ENCODE measurements at regions of chr4 and their contacts with region 1.

Region 1: DNA sequence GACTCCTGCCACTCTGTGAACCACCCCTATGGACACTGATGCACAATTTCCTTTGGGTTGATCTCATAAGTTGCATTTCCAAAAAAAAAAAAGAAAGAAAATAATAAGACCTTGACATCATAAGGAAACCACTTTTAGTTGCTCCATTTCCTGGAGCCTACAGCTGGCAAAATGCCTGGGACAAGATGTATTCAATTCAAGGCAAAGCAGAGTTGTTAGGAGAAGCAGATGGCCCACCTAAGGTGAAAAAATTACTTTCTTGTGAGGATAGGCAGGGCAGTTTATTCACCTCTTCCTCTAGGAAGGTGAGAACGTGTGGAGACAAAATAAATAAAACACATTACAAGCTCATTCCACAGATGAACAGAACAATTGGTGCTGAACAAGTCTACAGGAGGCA is 14.1 kb upstream of the SCRG1 start:
- DNase-seq: no peak
- H3K4me3 ChIP-seq: no peak overlapping the region
- H3K27ac ChIP-seq: no peak overlapping the region
- H3K4me1 ChIP-seq: peaks cover 27% of the 10 kb centered on the region
- H3K27me3 ChIP-seq: no peaks in the 10 kb centered on the region
- CTCF ChIP-seq: no peak

Region 2: GRCh38 chr4:173311368-173311767 is 101.7 kb before region 1 on chr4:
- CTCF ChIA-PET with region 1: no interaction called
- dilution Hi-C with region 1: no loop called
- in situ Hi-C with region 1: loop called in 1 of 2 experiments (anchors 5 kb)
- intact Hi-C with region 1: no loop called
- DNase-seq: no peak
- H3K4me3 ChIP-seq: no peak overlapping the region
- H3K27ac ChIP-seq: no peak overlapping the region
- H3K4me1 ChIP-seq: peaks cover 7% of the 10 kb centered on the region
- H3K27me3 ChIP-seq: no peaks in the 10 kb centered on the region
- CTCF ChIP-seq: no peak

Region 3: DNA sequence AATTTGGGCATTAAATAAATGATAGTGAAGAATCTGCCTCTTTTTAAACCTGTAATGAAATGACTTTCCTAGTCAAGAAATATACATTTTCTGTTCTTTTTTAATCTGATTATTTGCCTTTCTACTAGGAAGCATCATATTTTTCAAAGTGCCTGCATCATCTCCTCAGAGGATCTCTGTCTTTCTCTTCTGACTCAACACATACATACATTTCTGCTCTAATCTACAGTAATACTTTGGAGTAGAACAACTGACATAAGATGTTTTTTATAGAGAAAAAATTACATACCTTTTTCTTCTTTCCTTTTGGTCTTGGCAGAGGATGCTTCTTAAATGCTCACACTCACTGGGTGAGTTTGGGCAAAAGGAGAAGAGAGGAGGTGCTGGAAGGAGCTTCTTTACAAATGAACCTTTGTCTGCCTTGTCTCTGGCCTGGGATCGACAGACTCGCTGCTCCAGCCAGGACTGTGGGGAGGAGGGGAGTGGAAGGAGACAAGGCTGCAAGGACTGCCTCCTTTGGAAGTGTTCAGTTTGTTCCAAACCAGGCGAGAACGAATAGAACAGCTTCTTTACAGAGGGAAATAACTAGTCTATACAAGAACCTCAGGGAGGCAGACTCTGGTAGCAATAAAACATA is 14.1 kb before region 1 on chr4 and contains the start of gene SCRG1:
- CTCF ChIA-PET with region 1: no interaction called
- dilution Hi-C with region 1: no loop called
- in situ Hi-C with region 1: no loop called
- intact Hi-C with region 1: no loop called
- DNase-seq: no peak
- H3K4me3 ChIP-seq: no peak within 1 kb of the TSS
- H3K27ac ChIP-seq: no peak within 1 kb of the TSS
- H3K4me1 ChIP-seq: no peaks in the 10 kb centered on the region
- H3K27me3 ChIP-seq: no peaks in the 10 kb centered on the region
- CTCF ChIP-seq: no peak
- total RNA-seq, gene SCRG1: 3.0 TPM in 1 of 2 donors, not detected in the other

Measured in mammary epithelial cell (primary cell).